Common myeloid progenitor, CD34-positive (primary cell): ENCODE measurements at regions of chr14 and their contacts with region 1.

Region 1: GRCh38 chr14:96741151-96741977 is 55.8 kb upstream of the VRK1 start:
- DNase-seq: peak; percentile 39 to 76 (median 76)
- H3K4me3 ChIP-seq: peak overlapping the region in 6 of 7 experiments; percentile 4 to 74 (median 49)
- H3K27ac ChIP-seq: no peak overlapping the region
- H3K4me1 ChIP-seq: peaks cover 0 to 14% (median 9%) of the 10 kb centered on the region in 4 experiments
- H3K27me3 ChIP-seq: peaks cover 16 to 67% (median 26%) of the 10 kb centered on the region in 5 experiments

Region 2: DNA sequence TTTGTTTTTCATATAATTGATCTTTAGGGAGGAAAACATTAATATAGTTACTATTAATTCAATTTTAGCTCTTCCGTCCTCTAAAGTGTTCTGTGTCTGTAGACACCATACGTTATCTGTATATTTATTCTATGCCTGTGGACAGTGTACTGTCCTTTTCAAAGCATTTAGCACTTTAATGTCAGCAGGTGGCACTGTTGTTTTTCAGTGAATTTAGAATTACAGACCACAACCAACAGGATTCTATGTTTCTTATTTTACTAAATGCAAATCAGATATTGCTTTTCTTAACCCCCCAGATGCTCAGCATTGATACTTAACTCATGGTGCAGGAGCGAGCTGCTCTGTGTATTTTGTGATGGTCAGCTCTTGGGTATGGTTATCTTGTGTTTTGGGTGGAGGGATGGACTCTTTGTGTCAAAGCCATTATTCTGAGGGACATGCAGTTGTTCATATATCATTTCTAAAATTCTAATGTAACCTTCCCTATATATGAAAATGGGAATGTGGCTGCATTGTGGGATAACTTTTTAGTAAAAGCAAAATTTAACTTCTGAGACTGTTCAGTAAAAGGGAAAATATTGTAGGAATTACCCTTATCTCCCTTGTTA is 174.0 kb before region 1 on chr14:
- CTCF ChIA-PET with region 1: interaction called, 22 read pairs
- POLR2A ChIA-PET with region 1: no interaction called
- DNase-seq: peak; percentile 49 to 73 (median 66)
- H3K4me3 ChIP-seq: no peak overlapping the region
- H3K27ac ChIP-seq: no peak overlapping the region
- H3K4me1 ChIP-seq: no peaks in the 10 kb centered on the region
- H3K27me3 ChIP-seq: no peaks in the 10 kb centered on the region

Region 3: GRCh38 chr14:96626916-96627315 is 114.4 kb before region 1 on chr14:
- CTCF ChIA-PET with region 1: no interaction called
- POLR2A ChIA-PET with region 1: no interaction called
- DNase-seq: peak; percentile 46 to 84 (median 70)
- H3K4me3 ChIP-seq: peak overlapping the region in 4 of 7 experiments; percentile 19 to 74 (median 51)
- H3K27ac ChIP-seq: no peak overlapping the region
- H3K4me1 ChIP-seq: peaks cover 0 to 15% (median 8%) of the 10 kb centered on the region in 4 experiments
- H3K27me3 ChIP-seq: peaks cover 0 to 8% (median 0%) of the 10 kb centered on the region in 5 experiments

Region 4: GRCh38 chr14:96698960-96699539 is 42.3 kb before region 1 on chr14:
- CTCF ChIA-PET with region 1: no interaction called
- POLR2A ChIA-PET with region 1: no interaction called
- DNase-seq: no peak
- H3K4me3 ChIP-seq: no peak overlapping the region
- H3K27ac ChIP-seq: no peak overlapping the region
- H3K4me1 ChIP-seq: no peaks in the 10 kb centered on the region
- H3K27me3 ChIP-seq: peaks cover 0 to 5% (median 0%) of the 10 kb centered on the region in 5 experiments